ENCODE measurements at regions of chr6 and their contacts with region 1.

Region 1: DNA sequence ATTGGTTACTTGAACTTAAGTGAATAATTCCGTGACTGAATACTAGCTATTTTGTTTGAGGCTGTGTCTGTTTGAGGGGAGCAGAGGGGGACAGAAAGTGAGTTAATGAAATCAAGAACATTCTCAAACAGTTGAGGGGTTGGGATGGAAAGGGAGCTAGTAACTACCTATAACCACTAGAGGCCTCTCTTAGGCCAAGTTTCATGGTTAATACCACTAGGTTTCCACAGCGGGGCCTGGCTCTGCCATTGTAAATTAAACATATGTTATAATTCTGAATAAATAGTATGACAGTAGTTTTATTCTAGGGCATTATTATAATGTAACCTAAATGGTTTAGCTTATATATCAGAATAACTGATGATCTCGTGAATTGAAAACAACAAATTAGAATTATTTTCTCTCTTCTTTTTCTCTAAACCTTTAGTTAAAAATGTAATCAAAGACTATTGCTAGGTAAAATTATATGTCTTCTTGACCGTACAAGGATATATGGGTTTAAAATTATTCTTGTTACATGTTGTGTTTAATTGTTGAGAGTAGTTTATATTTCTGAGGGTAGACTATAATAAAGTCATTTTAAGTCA is 108.1 kb downstream of the BCKDHB start:
- DNase-seq: no peak
- ATAC-seq: peak; percentile 85
- H3K4me3 Mint-ChIP-seq: no peak overlapping the region
- H3K27ac Mint-ChIP-seq: no peak overlapping the region
- H3K4me1 Mint-ChIP-seq: peaks cover 42% of the 10 kb centered on the region
- H3K27me3 Mint-ChIP-seq: no peaks in the 10 kb centered on the region
- CTCF ChIP-seq: peak; percentile 43

Region 2: GRCh38 chr6:80182291-80182690 is 32.2 kb before region 1 on chr6:
- CTCF ChIA-PET with region 1: no interaction called
- POLR2A ChIA-PET with region 1: no interaction called
- DNase-seq: no peak
- ATAC-seq: no peak
- H3K4me3 Mint-ChIP-seq: no peak overlapping the region
- H3K27ac Mint-ChIP-seq: no peak overlapping the region
- H3K4me1 Mint-ChIP-seq: peaks cover 19% of the 10 kb centered on the region
- H3K27me3 Mint-ChIP-seq: no peaks in the 10 kb centered on the region
- CTCF ChIP-seq: no peak

Region 3: GRCh38 chr6:80227545-80228105 is 13.1 kb after region 1 on chr6:
- CTCF ChIA-PET with region 1: interaction called, 12 read pairs
- POLR2A ChIA-PET with region 1: no interaction called
- DNase-seq: no peak
- ATAC-seq: no peak
- H3K4me3 Mint-ChIP-seq: no peak overlapping the region
- H3K27ac Mint-ChIP-seq: no peak overlapping the region
- H3K4me1 Mint-ChIP-seq: peaks cover 18% of the 10 kb centered on the region
- H3K27me3 Mint-ChIP-seq: no peaks in the 10 kb centered on the region
- CTCF ChIP-seq: no peak

Region 4: GRCh38 chr6:80523531-80523997 is 309.0 kb after region 1 on chr6:
- CTCF ChIA-PET with region 1: interaction called, 11 read pairs
- POLR2A ChIA-PET with region 1: no interaction called
- DNase-seq: peak; percentile 79
- ATAC-seq: peak; percentile 100
- H3K4me3 Mint-ChIP-seq: no peak overlapping the region; the same call in 1 of the 2 replicates
- H3K27ac Mint-ChIP-seq: peak overlapping the region; percentile 92
- H3K4me1 Mint-ChIP-seq: peaks cover 39% of the 10 kb centered on the region
- H3K27me3 Mint-ChIP-seq: no peaks in the 10 kb centered on the region
- CTCF ChIP-seq: no peak

Region 5: DNA sequence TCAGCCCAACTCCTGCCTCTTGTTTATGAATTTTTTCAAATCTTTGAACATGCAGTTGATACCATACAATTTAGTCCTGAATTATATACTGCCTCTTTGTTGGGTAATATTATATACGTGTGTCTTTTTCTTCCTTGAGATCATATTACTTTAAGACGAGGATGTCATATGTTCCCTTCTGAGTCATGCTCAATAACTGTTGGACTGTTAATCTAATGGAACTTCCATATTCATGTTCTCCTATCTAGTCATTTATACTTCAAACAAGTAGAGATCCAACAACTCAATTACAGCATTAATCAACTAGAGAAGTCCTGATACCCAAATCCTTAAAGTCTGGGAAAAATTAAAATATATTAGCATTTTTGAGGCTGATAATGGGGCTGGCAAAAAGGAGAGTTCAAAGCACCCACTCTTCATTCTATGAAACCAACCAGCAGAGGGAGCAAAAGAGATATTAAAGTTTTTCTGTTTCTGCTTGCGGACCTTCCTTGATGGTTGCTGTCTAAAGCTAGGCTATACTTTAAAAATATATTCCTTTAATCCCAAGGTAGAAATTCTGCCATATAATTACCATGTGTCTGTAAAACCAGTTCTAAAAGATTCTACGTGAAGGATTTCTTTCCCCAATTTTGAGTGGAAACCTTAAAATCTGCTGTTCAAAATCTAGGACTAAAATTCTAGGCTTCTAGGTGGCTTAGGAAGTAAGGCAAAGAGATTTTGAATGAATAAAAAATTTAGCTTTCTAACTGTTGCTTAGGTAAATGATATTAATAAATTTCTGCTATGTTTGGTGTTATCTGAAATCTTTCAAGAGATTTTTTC is 390.8 kb after region 1 on chr6:
- CTCF ChIA-PET with region 1: interaction called, 12 read pairs
- POLR2A ChIA-PET with region 1: no interaction called
- DNase-seq: no peak
- ATAC-seq: peak; percentile 75; the same call in 1 of the 2 replicates
- H3K4me3 Mint-ChIP-seq: no peak overlapping the region
- H3K27ac Mint-ChIP-seq: no peak overlapping the region
- H3K4me1 Mint-ChIP-seq: peaks cover 3% of the 10 kb centered on the region
- H3K27me3 Mint-ChIP-seq: no peaks in the 10 kb centered on the region
- CTCF ChIP-seq: peak; percentile 42

Measured in WTC11 (cell line).